Activated T-helper 1 cell treated with anti-CD3 and anti-CD28 coated beads, Interleukin-12 subunit alpha, Interleukin-12 subunit beta, Interleukin-2, Interleukin-4 antibody, amounts not matched to agents 30 ng/mL and 10 ng/mL and 1 ng/mL, durations not matched to agents 14 hours and 24 hours and 36 hours (primary cell): ENCODE measurements at regions of chr6 and their contacts with region 1.

Region 1: DNA sequence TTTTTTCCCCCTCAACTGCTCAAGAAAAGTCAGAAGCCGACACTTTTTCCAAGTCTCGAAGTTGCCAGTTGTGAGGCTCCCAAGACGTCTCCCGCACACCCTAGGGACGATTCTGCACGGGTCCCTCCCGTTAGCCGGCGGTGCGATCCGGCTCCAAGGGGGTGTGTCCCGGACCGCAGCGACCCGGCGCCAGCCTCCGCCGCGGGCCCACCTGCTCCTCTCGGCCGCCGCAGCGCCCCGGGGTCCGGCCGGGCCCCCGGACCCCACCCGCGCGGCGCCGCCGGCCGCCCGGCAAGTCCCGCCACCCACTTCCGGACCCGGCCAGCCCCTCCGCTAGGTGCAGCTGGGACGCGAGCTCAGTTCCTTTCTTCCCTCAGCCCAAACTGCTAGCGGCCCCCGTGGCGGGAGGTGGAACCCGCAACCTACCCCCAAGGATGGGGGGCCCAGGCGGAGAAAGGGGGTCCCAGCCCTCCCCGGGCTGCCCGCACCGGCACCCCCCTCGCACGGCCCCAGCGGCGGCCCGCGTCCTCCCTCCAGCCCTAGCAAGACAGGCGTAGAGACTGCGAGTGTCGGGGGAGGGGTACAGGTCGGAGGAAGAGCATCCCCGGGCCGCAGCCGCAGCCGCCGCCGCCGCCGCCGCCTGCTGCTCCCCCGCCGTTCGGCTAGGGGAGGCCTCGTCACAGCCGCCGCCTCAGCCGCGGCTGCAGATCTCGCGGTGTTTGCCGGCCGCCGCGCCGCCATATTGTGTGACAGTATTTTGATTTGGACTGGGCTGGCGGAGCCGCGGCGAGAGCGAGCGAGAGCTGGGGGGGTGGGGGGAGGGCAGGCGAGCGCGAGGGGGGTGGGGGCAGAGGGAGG is 485 bp upstream of the TAB2 start:
- DNase-seq: peak; percentile 90
- H3K4me3 Mint-ChIP-seq: peak overlapping the region; percentile 85
- H3K27ac Mint-ChIP-seq: peak overlapping the region; percentile 85
- H3K4me1 Mint-ChIP-seq: peaks cover 39% of the 10 kb centered on the region
- H3K27me3 Mint-ChIP-seq: no peaks in the 10 kb centered on the region

Region 2: DNA sequence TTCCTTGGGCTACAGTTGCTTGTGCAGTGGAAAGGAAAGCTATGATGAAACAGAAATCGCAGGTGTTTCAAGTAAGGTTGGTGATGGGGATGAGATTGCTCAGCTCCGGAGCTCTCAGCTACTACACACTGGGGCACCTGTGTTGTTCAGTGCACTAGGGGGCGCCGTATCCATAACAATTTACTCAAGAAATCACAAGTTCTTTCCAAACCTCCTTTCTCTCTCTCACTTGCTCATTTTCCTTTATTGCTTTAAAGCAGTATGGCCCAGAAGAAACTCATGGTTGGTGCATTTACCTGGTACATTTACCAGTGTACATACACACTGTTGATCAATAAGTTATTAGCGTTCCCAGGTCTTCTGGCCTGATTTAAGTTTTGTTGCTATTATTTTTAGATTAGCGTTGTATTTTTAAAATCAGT is 234.7 kb before region 1 on chr6:
- intact Hi-C with region 1: loop called (anchors 1 kb)
- DNase-seq: peak; percentile 81
- H3K4me3 Mint-ChIP-seq: peak overlapping the region; percentile 80
- H3K27ac Mint-ChIP-seq: peak overlapping the region; percentile 92
- H3K4me1 Mint-ChIP-seq: peaks cover 89% of the 10 kb centered on the region
- H3K27me3 Mint-ChIP-seq: no peaks in the 10 kb centered on the region

Region 3: GRCh38 chr6:149147938-149148718 is 168.9 kb before region 1 on chr6:
- intact Hi-C with region 1: loop called (anchors 1 kb)
- DNase-seq: peak; percentile 49
- H3K4me3 Mint-ChIP-seq: peak overlapping the region; percentile 34
- H3K27ac Mint-ChIP-seq: peak overlapping the region; percentile 96
- H3K4me1 Mint-ChIP-seq: peaks cover 89% of the 10 kb centered on the region
- H3K27me3 Mint-ChIP-seq: no peaks in the 10 kb centered on the region

Region 4: GRCh38 chr6:149235130-149235561 is 81.9 kb before region 1 on chr6:
- intact Hi-C with region 1: loop called (anchors 1 kb)
- DNase-seq: no peak
- H3K4me3 Mint-ChIP-seq: peak overlapping the region; percentile 75
- H3K27ac Mint-ChIP-seq: peak overlapping the region; percentile 97
- H3K4me1 Mint-ChIP-seq: peaks cover 71% of the 10 kb centered on the region
- H3K27me3 Mint-ChIP-seq: no peaks in the 10 kb centered on the region

Region 5: DNA sequence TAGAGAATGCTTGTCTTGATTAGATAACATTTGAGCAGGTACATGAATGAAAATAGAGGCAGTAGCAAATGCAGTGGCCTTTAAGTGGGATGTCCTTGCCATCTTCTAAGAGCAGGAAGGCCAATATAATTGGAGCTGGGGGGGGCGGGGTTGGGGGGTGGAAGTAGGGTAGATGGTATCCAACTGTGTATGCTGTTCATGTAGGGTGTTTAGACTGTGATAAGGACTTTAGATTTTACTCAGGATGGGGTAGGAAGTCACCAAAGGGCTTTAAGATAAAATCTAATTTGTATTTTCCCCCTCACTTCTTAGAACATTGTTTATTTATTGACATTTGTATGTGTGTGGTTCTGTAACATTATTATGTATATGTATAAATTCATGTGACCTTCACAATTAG is 12.5 kb after region 1 on chr6:
- intact Hi-C with region 1: loop called (anchors 1 kb)
- DNase-seq: no peak
- H3K4me3 Mint-ChIP-seq: peak overlapping the region; percentile 53
- H3K27ac Mint-ChIP-seq: peak overlapping the region; percentile 76
- H3K4me1 Mint-ChIP-seq: peaks cover 94% of the 10 kb centered on the region
- H3K27me3 Mint-ChIP-seq: no peaks in the 10 kb centered on the region

Region 6: DNA sequence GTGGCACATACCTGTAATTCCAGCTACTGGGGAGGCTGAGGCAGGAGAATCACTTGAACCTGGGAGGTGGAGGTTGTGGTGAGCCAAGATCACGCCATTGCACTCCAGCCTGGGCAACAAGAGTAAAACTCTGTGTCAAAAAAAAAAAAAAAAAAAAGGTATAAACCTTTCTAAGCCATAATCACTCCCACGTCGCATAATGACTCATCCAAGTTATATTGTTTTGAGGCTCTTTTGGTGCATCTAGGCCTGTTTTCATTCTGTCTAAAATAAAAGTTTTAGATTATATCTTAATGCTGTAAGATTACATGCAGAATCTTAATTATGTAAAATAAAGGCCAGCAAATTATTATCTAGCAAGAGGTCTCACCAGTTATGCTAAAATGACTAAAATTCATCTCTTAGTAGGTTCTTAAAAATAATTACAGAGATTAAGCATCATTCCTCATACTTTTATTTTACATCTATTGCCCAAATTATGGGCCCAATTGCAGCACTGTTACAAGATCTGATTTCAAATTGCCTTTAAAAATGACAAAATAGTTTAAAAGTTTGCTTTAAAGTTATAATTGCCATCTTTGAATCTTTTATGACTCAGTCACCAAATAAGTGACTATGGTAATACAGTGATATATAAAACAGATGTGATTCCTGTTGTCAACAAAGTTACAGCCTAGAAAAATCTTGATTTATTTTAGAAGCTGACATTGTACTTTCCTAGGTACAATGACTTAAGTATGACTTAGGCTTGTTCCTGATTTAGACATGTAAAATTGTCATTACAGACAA is 72.7 kb after region 1 on chr6:
- intact Hi-C with region 1: loop called (anchors 2 kb)
- DNase-seq: no peak
- H3K4me3 Mint-ChIP-seq: no peak overlapping the region
- H3K27ac Mint-ChIP-seq: peak overlapping the region; percentile 45
- H3K4me1 Mint-ChIP-seq: peaks cover 82% of the 10 kb centered on the region
- H3K27me3 Mint-ChIP-seq: no peaks in the 10 kb centered on the region

Region 7: GRCh38 chr6:149499066-149499465 is 182.0 kb after region 1 on chr6:
- intact Hi-C with region 1: loop called (anchors 1 kb)
- DNase-seq: no peak
- H3K4me3 Mint-ChIP-seq: no peak overlapping the region
- H3K27ac Mint-ChIP-seq: peak overlapping the region; percentile 83
- H3K4me1 Mint-ChIP-seq: peaks cover 78% of the 10 kb centered on the region
- H3K27me3 Mint-ChIP-seq: no peaks in the 10 kb centered on the region

Region 8: DNA sequence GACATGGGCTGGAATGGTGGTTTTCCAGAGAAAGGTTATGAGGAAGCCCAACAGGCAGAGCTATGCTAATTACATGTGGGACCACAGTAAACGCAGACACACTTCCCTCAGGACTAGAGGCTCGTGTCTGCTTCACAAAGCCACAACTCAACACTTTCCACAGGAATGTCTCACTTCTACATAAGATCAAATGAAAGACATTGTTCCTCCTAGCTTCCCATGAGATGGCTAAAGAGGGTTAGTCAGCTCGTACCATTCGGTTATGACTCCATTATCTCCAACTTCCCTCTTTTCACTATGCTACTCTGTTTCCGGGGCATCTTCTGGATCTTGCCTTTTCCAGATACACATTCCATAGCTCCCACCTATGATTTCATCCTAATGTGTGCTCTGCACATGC is 196.9 kb after region 1 on chr6:
- intact Hi-C with region 1: no loop called
- DNase-seq: no peak
- H3K4me3 Mint-ChIP-seq: no peak overlapping the region
- H3K27ac Mint-ChIP-seq: no peak overlapping the region
- H3K4me1 Mint-ChIP-seq: peaks cover 47% of the 10 kb centered on the region
- H3K27me3 Mint-ChIP-seq: no peaks in the 10 kb centered on the region

Region 9: DNA sequence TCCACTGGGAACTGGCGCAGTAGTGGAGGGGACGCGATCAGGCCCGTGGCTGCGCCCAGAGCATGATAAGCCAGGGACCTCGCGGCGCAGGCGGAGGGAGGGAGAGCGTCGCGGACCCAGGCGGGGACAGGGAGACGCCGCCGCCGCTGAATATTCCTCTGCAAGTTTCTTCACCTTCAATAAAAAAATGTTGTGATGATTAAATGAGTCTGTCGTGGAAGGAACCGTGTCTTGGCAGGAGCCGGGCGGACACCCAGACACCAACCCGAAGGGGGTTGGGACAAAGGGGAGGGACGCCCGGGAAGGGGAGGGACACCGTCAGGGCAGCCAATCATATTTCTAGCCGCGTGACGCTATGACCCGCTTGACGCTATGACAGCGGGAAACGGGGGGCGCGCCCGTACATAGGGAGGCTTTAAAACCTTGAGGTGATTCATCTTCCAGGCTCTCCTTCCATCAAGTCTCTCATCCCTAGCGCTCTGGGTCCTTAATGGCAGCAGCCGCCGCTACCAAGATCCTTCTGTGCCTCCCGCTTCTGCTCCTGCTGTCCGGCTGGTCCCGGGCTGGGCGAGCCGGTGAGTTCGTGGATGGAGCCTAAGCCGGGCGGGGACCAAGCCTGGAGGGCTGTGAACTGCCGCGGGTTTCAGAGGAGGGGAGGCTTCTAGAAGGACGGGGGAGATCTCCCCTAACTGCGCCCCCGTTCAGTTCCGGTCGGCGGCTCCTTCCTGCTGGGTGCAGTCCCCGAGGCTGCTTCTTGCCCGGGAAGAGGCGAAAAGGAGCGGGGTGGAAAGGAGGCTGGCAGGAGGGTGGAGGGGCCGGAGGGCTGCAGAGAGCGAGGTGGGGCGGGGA is 624.8 kb after region 1 on chr6 and contains the start of gene ULBP2:
- intact Hi-C with region 1: no loop called
- DNase-seq: peak; percentile 81
- H3K4me3 Mint-ChIP-seq: peak within 1 kb of the TSS; percentile 90
- H3K27ac Mint-ChIP-seq: peak within 1 kb of the TSS; percentile 84
- H3K4me1 Mint-ChIP-seq: peaks cover 42% of the 10 kb centered on the region
- H3K27me3 Mint-ChIP-seq: peaks cover 76% of the 10 kb centered on the region
- total RNA-seq, gene ULBP2: 0.32 and 0.65 TPM in 2 replicates